ENCODE measurements at regions of chr16 and their contacts with region 1.

Region 1: GRCh38 chr16:67546761-67547422 is 15.4 kb upstream of the CTCF start:
- DNase-seq: peak; percentile 72 to 84 (median 82)
- H3K4me3 ChIP-seq: peak overlapping the region in 6 of 7 experiments; percentile 10 to 68 (median 50)
- H3K27ac ChIP-seq: peak overlapping the region; percentile 72 to 82
- H3K4me1 ChIP-seq: peaks cover 7 to 81% (median 61%) of the 10 kb centered on the region in 4 experiments
- H3K27me3 ChIP-seq: no peaks in the 10 kb centered on the region

Region 2: GRCh38 chr16:67530013-67530939 is 16.6 kb before region 1 on chr16:
- CTCF ChIA-PET with region 1: interaction called, 29 read pairs
- POLR2A ChIA-PET with region 1: interaction called, 3 read pairs
- DNase-seq: peak in 2 of 3 donors; percentile 45 to 60
- H3K4me3 ChIP-seq: peak overlapping the region; percentile 1 to 79 (median 71)
- H3K27ac ChIP-seq: peak overlapping the region in 1 of 2 experiments; percentile 62
- H3K4me1 ChIP-seq: peaks cover 10 to 65% (median 50%) of the 10 kb centered on the region in 4 experiments
- H3K27me3 ChIP-seq: no peaks in the 10 kb centered on the region

Region 3: GRCh38 chr16:67571981-67572431 is 25.1 kb after region 1 on chr16:
- CTCF ChIA-PET with region 1: interaction called, 15 read pairs
- POLR2A ChIA-PET with region 1: interaction called, 5 read pairs
- DNase-seq: no peak
- H3K4me3 ChIP-seq: no peak overlapping the region
- H3K27ac ChIP-seq: no peak overlapping the region
- H3K4me1 ChIP-seq: no peaks in the 10 kb centered on the region
- H3K27me3 ChIP-seq: no peaks in the 10 kb centered on the region

Region 4: GRCh38 chr16:67613808-67614207 is 66.9 kb after region 1 on chr16:
- CTCF ChIA-PET with region 1: interaction called, 11 read pairs
- POLR2A ChIA-PET with region 1: no interaction called
- DNase-seq: peak; percentile 11 to 23 (median 22)
- H3K4me3 ChIP-seq: no peak overlapping the region
- H3K27ac ChIP-seq: no peak overlapping the region
- H3K4me1 ChIP-seq: no peaks in the 10 kb centered on the region
- H3K27me3 ChIP-seq: no peaks in the 10 kb centered on the region

Region 5: DNA sequence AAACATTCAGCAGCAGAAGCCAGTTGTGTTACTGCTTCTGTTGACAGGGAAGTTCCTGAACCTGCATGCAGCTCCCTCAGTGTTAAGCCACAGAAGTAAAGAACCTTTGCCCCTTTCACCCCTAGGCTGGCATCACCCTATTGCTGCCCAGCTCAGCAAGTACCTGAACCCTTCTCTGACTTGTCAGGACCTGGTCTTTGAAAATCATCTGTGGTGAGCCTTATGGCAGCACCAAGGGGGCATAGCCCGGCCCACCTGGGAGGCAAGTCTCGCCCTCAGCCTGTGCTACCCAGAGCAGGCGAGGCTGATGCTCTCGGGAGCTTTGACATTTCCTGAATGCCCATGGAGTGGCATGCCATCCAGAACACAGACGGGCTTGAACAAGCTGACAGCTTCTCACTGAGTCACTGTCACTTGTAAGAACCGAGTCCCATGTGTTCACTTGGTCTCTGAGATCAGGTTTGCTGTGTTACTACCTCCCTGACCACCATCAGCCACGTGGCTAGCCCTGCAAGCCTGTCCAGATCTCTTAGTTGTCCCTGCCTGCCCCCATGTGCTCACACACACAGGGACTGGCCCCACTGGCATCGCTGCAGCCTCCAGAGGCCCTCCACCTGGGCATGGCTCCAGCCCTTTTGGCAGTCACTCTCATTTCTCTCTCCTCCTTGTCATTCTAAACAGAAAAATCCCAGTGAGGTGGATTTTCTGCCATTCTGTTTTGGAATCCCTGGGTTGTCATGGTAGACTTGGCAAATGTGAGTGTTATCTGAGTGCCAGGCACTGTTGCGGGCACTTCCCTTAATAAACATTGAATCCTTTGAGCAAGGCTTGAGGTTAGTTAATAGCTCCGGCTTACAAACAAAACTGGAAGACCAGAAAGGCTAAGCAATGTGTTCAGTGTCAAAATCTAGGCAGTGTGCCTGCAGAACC is 95.2 kb after region 1 on chr16:
- CTCF ChIA-PET with region 1: interaction called, 70 read pairs
- POLR2A ChIA-PET with region 1: interaction called, 13 read pairs
- DNase-seq: no peak
- H3K4me3 ChIP-seq: no peak overlapping the region
- H3K27ac ChIP-seq: no peak overlapping the region
- H3K4me1 ChIP-seq: peaks cover 0 to 22% (median 18%) of the 10 kb centered on the region in 4 experiments
- H3K27me3 ChIP-seq: no peaks in the 10 kb centered on the region

Region 6: GRCh38 chr16:67667817-67668494 is 121.1 kb after region 1 on chr16:
- CTCF ChIA-PET with region 1: interaction called, 27 read pairs
- POLR2A ChIA-PET with region 1: interaction called, 6 read pairs
- DNase-seq: peak; percentile 95 to 97 (median 97)
- H3K4me3 ChIP-seq: peak overlapping the region in 5 of 7 experiments; percentile 71 to 90 (median 81)
- H3K27ac ChIP-seq: peak overlapping the region in 1 of 2 experiments; percentile 45
- H3K4me1 ChIP-seq: peaks cover 2 to 40% (median 33%) of the 10 kb centered on the region in 4 experiments
- H3K27me3 ChIP-seq: no peaks in the 10 kb centered on the region

Measured in common myeloid progenitor, CD34-positive (primary cell).